Colonic mucosa (tissue), 4 donors: ENCODE measurements at regions of chr22 and their contacts with region 1.

Region 1: DNA sequence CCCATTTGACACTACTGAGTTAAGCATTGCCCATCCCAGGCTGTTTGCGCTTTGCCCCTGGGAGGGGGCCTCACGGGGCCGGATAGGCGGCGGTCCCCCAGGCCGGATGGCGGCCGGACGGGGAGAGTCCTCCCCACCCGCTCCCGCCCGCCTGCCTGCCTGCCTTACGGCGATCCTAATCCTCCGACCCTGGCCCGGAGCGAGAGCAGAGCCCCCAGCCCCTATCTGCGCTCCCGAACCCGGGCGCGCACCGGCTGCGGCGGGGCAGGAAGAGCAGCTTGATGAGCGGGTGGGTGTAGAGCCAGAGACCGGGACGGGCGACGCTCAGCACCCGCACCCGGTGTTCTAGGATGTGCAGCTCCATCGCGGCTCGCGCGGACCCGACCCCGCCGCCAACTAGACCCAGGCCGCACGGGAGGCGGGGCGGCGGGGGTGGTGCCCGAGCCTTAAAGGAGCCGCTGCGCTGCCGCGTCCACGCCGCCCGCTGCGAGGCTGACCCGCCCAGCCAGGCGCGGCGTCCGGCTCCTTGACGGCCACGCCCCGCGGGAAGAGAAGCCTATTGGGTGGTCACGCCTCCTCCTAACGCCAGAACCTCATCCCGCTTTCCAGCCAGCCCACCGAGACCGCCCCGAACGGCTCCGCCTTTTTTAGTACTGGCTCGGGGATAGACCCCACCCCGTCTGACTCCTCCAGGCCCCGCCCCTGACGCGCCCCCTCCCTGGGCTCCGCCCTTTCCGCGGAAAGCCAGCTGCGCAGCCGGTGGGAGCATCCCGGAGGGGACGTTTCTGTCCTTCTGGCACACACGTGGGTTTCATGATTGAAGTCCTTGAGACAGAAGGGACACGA is at the start of gene CASTOR1:
- DNase-seq: peak; percentile 99
- H3K4me3 ChIP-seq: peak within 1 kb of the TSS; percentile 91
- H3K27ac ChIP-seq: peak within 1 kb of the TSS; percentile 58
- H3K4me1 ChIP-seq: peaks cover 13% of the 10 kb centered on the region
- H3K27me3 ChIP-seq: no peaks in the 10 kb centered on the region
- CTCF ChIP-seq: no peak
- total RNA-seq, gene CASTOR1: 4.5 to 5.0 TPM

Region 2: DNA sequence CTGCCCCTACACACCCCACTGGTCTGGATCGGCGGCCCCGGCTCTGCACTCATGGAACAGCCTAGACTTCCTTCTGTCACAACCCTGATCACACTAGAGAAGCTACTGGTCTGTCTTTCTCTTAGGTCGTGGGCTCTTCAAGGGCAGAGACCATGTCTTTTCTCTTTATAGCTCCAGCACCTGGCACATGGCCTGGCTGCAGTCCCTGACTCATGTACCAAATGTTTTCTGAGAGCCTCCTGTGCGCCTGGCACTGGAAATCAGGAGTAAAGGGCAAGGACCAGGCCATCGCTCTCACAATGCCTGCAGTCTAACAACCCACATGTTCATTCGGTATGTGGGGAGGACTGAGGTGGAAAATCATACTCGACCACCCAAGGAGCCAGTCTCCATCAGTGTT is 458.8 kb before region 1 on chr22:
- intact Hi-C with region 1: no loop called
- DNase-seq: no peak
- H3K4me3 ChIP-seq: no peak overlapping the region
- H3K27ac ChIP-seq: no peak overlapping the region
- H3K4me1 ChIP-seq: no peaks in the 10 kb centered on the region
- H3K27me3 ChIP-seq: no peaks in the 10 kb centered on the region
- CTCF ChIP-seq: no peak

Region 3: GRCh38 chr22:30104501-30105156 is 184.7 kb before region 1 on chr22:
- intact Hi-C with region 1: loop called (anchors 2 kb)
- DNase-seq: no peak
- H3K4me3 ChIP-seq: no peak overlapping the region
- H3K27ac ChIP-seq: no peak overlapping the region
- H3K4me1 ChIP-seq: no peaks in the 10 kb centered on the region
- H3K27me3 ChIP-seq: no peaks in the 10 kb centered on the region
- CTCF ChIP-seq: no peak

Region 4: DNA sequence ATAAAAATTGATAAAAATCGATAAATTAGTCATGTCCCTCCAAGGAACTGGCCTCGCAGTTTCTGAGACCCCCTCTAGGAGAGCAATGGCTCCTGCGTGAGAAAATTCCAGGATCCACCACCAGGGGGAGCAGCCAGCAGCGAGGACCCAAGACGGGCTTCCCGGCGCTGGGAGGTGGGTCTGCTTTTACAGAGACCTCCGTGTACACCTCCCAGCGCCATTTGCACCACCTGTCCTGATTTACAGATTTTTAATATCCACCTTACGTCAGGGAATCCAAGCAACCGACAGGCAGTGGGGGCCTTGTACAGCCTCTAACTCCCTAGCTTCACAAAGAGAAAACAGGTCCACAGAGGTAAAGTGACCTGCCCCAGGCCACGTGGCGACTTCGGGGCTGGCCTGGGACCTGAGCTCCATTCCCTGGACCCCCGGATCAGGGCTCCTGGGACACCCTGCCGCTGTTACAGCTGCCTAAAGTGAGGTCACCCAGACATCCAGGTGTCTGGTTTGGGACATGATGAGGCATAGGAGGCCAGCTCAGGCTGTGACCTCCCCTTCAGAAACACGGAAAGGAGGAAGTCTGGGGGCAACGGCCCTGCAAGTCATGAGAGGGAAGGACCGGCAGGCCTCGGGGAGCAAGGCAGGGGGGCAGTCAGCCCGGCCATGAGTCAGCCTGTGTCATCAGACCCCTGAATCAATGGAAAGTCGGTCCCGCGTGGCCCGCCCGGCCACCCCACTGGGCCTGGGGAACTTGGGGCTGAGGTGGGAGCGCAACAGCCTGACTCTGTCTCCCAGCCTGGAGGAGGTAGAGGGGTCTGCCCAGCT is 26.2 kb before region 1 on chr22:
- intact Hi-C with region 1: loop called (anchors 2 kb)
- DNase-seq: peak; percentile 85
- H3K4me3 ChIP-seq: no peak overlapping the region
- H3K27ac ChIP-seq: no peak overlapping the region
- H3K4me1 ChIP-seq: no peaks in the 10 kb centered on the region
- H3K27me3 ChIP-seq: no peaks in the 10 kb centered on the region
- CTCF ChIP-seq: peak; percentile 99

Region 5: GRCh38 chr22:30356449-30357235 is 67.3 kb after region 1 on chr22 and contains the starts of genes CCDC157 and SF3A1:
- intact Hi-C with region 1: loop called (anchors 2 kb)
- DNase-seq: peak; percentile 88
- H3K4me3 ChIP-seq: peak within 1 kb of the TSS; percentile 72
- H3K27ac ChIP-seq: peak within 1 kb of the TSS; percentile 92
- H3K4me1 ChIP-seq: peaks cover 13% of the 10 kb centered on the region
- H3K27me3 ChIP-seq: no peaks in the 10 kb centered on the region
- CTCF ChIP-seq: no peak
- total RNA-seq, gene CCDC157: 1.1 to 1.6 TPM
- total RNA-seq, gene SF3A1: 151 to 194 TPM